Right ventricle myocardium superior (tissue), 1 donor: ENCODE measurements at regions of chr20 and their contacts with region 1.

Region 1: DNA sequence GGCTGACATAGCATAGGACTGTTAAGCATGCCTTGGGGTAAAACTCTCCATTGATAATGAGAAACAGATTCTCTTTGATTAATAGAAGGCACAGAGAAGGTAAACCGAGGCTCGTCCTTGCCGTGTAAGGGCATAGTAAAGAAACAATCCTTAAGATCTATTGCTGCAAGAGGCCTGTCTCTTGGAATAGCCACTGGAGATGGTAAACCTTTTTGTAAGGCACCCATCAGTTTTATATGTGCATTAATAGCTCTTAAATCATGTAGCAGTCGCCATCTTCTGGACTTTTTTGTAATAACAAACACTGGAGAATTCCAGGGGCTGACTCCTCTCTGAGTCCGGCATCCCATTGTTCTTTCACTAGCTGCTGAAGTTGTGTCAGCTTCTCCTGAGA is 8.4 kb upstream of the ABHD12 start:
- DNase-seq: no peak
- ATAC-seq: peak; percentile 90

Region 2: GRCh38 chr20:24735263-24735662 is 663.8 kb before region 1 on chr20:
- intact Hi-C with region 1: no loop called
- DNase-seq: no peak
- ATAC-seq: no peak

Region 3: DNA sequence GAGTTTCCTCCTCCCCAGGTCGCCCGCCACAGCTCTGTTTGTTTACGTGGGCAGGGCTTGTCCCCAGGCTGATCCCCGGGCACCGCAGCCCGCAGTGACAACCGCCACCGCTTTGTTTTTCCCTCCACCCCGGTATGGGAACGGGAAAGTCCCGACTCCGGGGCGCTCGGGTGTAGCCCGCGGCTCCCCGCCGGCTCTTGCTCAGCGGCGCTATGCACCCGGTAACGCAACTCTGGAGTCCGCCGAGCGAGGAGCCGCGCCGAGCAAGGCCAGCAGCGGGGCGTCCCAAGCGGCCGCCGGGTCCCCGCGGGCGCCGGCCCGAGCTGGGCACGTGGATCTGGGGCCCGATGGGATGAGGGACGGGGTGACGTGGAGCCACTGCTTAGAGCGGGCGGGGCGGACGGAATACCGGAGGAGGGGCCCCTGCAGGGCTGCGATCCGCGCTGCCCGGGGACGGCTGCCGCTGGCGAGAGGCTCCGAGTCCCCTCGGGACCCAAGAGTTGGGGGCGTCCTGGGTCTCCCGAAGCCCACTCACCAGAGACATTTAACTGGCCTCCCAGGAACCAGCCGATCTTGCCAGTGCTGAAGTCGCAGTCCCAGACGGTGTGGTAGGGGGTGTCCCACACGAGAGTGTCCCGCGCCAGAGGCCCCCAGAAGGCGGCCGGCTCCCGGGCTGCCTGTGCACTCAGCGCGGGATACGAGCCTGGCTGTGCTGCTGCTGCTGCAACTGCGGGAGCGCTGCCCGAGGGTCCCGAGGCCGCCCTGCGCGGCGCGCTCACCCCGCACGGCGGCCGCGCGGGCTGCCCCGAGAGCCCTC is 341.6 kb before region 1 on chr20:
- intact Hi-C with region 1: loop called (anchors 5 kb)
- DNase-seq: peak; percentile 86
- ATAC-seq: peak; percentile 76

Region 4: DNA sequence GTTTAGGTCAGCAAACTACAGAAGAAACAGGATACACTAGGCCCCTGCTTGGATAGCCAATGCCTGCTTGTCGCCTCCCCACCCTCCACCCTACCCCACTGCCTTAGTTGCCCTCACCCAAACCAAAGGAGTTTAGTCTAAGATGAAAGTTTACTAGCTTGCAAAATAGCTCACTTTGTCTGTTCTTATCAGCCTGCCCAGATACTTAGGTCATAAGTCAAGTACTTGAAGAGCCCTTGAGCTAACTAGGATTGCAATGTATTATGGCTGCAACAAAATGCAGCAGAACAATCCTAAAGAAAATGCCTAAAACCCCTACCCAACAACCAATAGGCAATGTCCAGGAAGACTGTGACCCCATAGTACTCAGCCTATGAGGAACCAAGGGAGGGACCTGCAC is 210.8 kb before region 1 on chr20:
- intact Hi-C with region 1: loop called (anchors 5 kb)
- DNase-seq: no peak
- ATAC-seq: no peak

Region 5: GRCh38 chr20:25294459-25295385 is 104.3 kb before region 1 on chr20:
- intact Hi-C with region 1: loop called (anchors 5 kb)
- DNase-seq: no peak
- ATAC-seq: peak; percentile 24

Region 6: DNA sequence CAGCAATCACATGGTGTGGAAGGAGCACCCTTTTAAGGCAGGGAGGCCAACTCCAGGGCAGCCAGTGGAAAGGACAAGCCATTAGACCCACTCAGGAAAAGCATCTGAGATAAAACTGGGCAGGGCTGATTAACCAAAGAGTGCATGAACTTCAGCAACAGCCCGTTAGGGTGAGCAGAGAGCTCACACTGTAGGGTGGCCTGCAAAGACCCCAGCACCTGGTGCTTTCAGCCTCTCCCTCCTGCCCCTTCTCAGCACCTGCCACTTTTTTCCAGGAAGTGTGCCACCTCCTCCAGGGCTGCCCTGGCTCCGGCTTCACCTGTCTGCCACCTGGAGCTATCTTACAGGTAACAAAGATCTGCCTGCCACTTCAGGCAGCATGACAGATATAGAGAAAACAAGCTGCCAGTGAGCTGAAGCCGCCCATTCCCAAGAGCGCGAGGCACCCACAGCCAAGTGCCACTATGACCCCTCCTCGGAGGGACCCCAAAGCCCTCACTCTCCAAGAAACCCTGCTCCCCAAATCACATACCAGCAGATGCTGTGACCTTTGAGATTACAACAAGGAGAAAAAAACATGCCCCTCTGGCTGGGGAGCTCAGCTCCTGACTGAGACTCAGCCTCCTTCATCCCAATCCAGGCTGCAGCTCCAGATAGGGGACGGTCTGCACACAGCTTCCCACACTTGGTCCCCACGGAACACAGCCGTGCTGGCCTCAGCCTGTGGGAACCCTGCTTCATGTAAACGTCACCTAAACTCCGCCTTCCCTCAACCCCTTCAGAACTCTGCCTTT is 79.6 kb before region 1 on chr20:
- intact Hi-C with region 1: no loop called
- DNase-seq: no peak
- ATAC-seq: peak; percentile 54